Mammary epithelial cell (primary cell): ENCODE measurements at regions of chr2 and their contacts with region 1.

Region 1: DNA sequence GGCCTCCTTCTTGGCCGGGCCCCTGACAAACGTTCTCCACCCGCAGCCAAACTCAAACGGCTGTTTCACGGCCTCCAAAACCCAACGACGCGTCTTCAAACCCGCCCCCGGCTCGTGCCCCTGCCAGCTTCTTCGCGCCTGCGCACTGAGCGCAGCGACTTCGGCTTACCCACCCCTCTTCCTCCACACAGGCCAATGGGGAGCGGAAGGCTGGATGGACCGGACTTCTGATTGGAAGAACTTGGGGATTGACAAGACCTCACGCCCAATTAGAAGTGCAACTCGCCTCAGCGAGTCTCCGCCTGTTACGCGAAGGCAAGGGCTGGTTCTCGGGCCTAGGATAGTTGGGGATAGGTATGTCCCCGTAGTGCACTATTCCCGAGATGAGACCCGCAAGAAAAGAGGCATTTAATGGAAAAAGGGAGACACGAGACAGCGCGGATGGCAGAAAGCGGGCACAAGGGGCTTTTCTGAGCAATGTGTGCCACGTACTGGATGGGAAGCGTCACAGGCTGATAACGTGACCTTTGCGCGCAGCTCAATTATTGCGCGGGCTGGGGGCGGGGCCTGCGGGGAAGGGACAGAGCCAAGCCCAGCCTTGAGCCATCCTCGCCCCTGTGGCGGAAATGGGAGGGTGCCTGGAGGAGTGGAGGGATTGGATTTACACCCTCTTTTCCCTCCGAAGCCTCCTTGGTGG is at the start of gene LAPTM4A:
- DNase-seq: peak; percentile 100
- H3K4me3 ChIP-seq: peak within 1 kb of the TSS; percentile 75 to 97 (median 87)
- H3K27ac ChIP-seq: peak within 1 kb of the TSS; percentile 93
- H3K4me1 ChIP-seq: peaks cover 22% of the 10 kb centered on the region
- H3K27me3 ChIP-seq: no peaks in the 10 kb centered on the region
- CTCF ChIP-seq: peak in 1 of 2 donors; percentile 3
- total RNA-seq, gene LAPTM4A: 160 to 162 TPM

Region 2: GRCh38 chr2:20015472-20016083 is 36.1 kb before region 1 on chr2:
- CTCF ChIA-PET with region 1: interaction called, 7 read pairs
- dilution Hi-C with region 1: no loop called
- in situ Hi-C with region 1: no loop called
- intact Hi-C with region 1: loop called (anchors 2 kb)
- DNase-seq: peak; percentile 43
- H3K4me3 ChIP-seq: no peak overlapping the region
- H3K27ac ChIP-seq: no peak overlapping the region
- H3K4me1 ChIP-seq: peaks cover 13% of the 10 kb centered on the region
- H3K27me3 ChIP-seq: no peaks in the 10 kb centered on the region
- CTCF ChIP-seq: peak; percentile 37 to 57